Breast epithelium (tissue), 4 donors: ENCODE measurements at regions of chr14 and their contacts with region 1.

Region 1: GRCh38 chr14:58747181-58747580 is 109.4 kb downstream of the DACT1 start:
- DNase-seq: peak in 1 of 2 donors; percentile 49
- H3K4me3 ChIP-seq: no peak overlapping the region
- H3K27ac ChIP-seq: peak overlapping the region; percentile 43 to 73
- H3K4me1 ChIP-seq: peaks cover 0 to 10% of the 10 kb centered on the region in 2 donors
- H3K27me3 ChIP-seq: no peaks in the 10 kb centered on the region
- CTCF ChIP-seq: no peak
- POLR2A ChIP-seq: no peak

Region 2: GRCh38 chr14:58817846-58818245 is 70.7 kb after region 1 on chr14:
- intact Hi-C with region 1: loop called (anchors 2 kb)
- DNase-seq: no peak
- H3K4me3 ChIP-seq: no peak overlapping the region
- H3K27ac ChIP-seq: no peak overlapping the region
- H3K4me1 ChIP-seq: no peaks in the 10 kb centered on the region
- H3K27me3 ChIP-seq: no peaks in the 10 kb centered on the region
- CTCF ChIP-seq: no peak
- POLR2A ChIP-seq: no peak